ENCODE measurements at regions of chr4 and their contacts with region 1.

Region 1: GRCh38 chr4:59161249-59161648 is 2038.9 kb upstream of the ADGRL3 start:
- DNase-seq: no peak
- ATAC-seq: no peak
- H3K4me3 ChIP-seq: no peak overlapping the region
- H3K27ac ChIP-seq: no peak overlapping the region
- H3K4me1 ChIP-seq: no peaks in the 10 kb centered on the region
- H3K27me3 ChIP-seq: no peaks in the 10 kb centered on the region
- CTCF ChIP-seq: no peak
- POLR2A ChIP-seq: no peak
- RAD21 ChIP-seq: no peak

Region 2: GRCh38 chr4:58688568-58688967 is 472.7 kb before region 1 on chr4:
- CTCF ChIA-PET with region 1: no interaction called
- POLR2A ChIA-PET with region 1: no interaction called
- dilution Hi-C with region 1: no loop called
- in situ Hi-C with region 1: no loop called
- intact Hi-C with region 1: loop called (anchors 5 kb)
- DNase-seq: no peak
- ATAC-seq: no peak
- H3K4me3 ChIP-seq: no peak overlapping the region
- H3K27ac ChIP-seq: no peak overlapping the region
- H3K4me1 ChIP-seq: no peaks in the 10 kb centered on the region
- H3K27me3 ChIP-seq: no peaks in the 10 kb centered on the region
- CTCF ChIP-seq: no peak
- POLR2A ChIP-seq: no peak
- RAD21 ChIP-seq: no peak

Region 3: GRCh38 chr4:59217910-59218631 is 56.8 kb after region 1 on chr4:
- CTCF ChIA-PET with region 1: no interaction called
- POLR2A ChIA-PET with region 1: no interaction called
- dilution Hi-C with region 1: no loop called
- in situ Hi-C with region 1: no loop called
- intact Hi-C with region 1: loop called (anchors 10 kb)
- DNase-seq: no peak
- ATAC-seq: no peak
- H3K4me3 ChIP-seq: no peak overlapping the region
- H3K27ac ChIP-seq: no peak overlapping the region
- H3K4me1 ChIP-seq: no peaks in the 10 kb centered on the region
- H3K27me3 ChIP-seq: no peaks in the 10 kb centered on the region
- CTCF ChIP-seq: no peak
- POLR2A ChIP-seq: no peak
- RAD21 ChIP-seq: no peak

Measured in IMR-90 (cell line).